Aorta (tissue), 5 donors: ENCODE measurements at regions of chr6 and their contacts with region 1.

Region 1: GRCh38 chr6:140160909-140161308 is 786.5 kb upstream of the CITED2 start:
- DNase-seq: no peak
- ATAC-seq: no peak
- H3K4me3 ChIP-seq: no peak overlapping the region
- H3K27ac ChIP-seq: no peak overlapping the region
- H3K4me1 ChIP-seq: no peaks in the 10 kb centered on the region
- H3K27me3 ChIP-seq: no peaks in the 10 kb centered on the region

Region 2: GRCh38 chr6:140174515-140174914 is 13.6 kb after region 1 on chr6:
- intact Hi-C with region 1: loop called in 1 of 2 experiments (anchors 1 kb)
- DNase-seq: no peak
- ATAC-seq: no peak
- H3K4me3 ChIP-seq: no peak overlapping the region
- H3K27ac ChIP-seq: no peak overlapping the region
- H3K4me1 ChIP-seq: no peaks in the 10 kb centered on the region
- H3K27me3 ChIP-seq: no peaks in the 10 kb centered on the region